ENCODE measurements at regions of chr2 and their contacts with region 1.

Region 1: DNA sequence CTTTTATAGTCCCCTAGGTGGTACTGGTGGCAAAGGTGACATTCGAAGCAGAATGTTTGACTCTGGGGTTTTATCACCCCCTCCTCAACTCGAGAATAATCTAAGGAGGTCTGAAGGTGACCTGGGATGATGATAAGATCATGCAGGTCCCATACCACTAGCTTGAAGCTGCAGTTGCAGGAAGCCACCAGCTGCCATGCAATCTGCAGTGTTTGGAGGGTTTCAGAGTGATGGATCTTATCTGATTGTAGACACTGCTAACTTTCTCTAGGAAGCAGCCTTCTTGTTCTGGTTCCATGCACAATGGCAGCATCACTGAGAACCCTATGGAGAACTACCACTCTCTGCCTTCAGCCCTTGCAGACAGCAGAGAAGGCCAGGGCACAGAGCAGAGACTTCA is 59.4 kb upstream of the LRPPRC start:
- DNase-seq: no peak
- ATAC-seq: no peak
- H3K4me3 ChIP-seq: no peak overlapping the region
- H3K4me3 Mint-ChIP-seq: no peak overlapping the region
- H3K27ac ChIP-seq: no peak overlapping the region
- H3K27ac Mint-ChIP-seq: no peak overlapping the region
- H3K4me1 ChIP-seq: no peaks in the 10 kb centered on the region
- H3K4me1 Mint-ChIP-seq: no peaks in the 10 kb centered on the region
- H3K27me3 ChIP-seq: no peaks in the 10 kb centered on the region
- H3K27me3 Mint-ChIP-seq: no peaks in the 10 kb centered on the region
- CTCF ChIP-seq: no peak

Region 2: GRCh38 chr2:44226753-44227152 is 171.5 kb after region 1 on chr2:
- CTCF ChIA-PET with region 1: no interaction called
- POLR2A ChIA-PET with region 1: no interaction called
- intact Hi-C with region 1: no loop called
- DNase-seq: no peak
- ATAC-seq: no peak
- H3K4me3 ChIP-seq: no peak overlapping the region
- H3K4me3 Mint-ChIP-seq: no peak overlapping the region
- H3K27ac ChIP-seq: no peak overlapping the region
- H3K27ac Mint-ChIP-seq: peak overlapping the region; percentile 36
- H3K4me1 ChIP-seq: no peaks in the 10 kb centered on the region
- H3K4me1 Mint-ChIP-seq: peaks cover 15% of the 10 kb centered on the region
- H3K27me3 ChIP-seq: no peaks in the 10 kb centered on the region
- H3K27me3 Mint-ChIP-seq: no peaks in the 10 kb centered on the region
- CTCF ChIP-seq: no peak

Region 3: GRCh38 chr2:44674473-44675284 is 619.5 kb after region 1 on chr2:
- CTCF ChIA-PET with region 1: no interaction called
- POLR2A ChIA-PET with region 1: no interaction called
- intact Hi-C with region 1: loop called in 1 of 2 experiments (anchors 5 kb)
- DNase-seq: peak in 1 of 14 experiments; percentile 13
- ATAC-seq: no peak
- H3K4me3 ChIP-seq: no peak overlapping the region
- H3K4me3 Mint-ChIP-seq: no peak overlapping the region
- H3K27ac ChIP-seq: no peak overlapping the region
- H3K27ac Mint-ChIP-seq: no peak overlapping the region
- H3K4me1 ChIP-seq: peaks cover 3% of the 10 kb centered on the region
- H3K4me1 Mint-ChIP-seq: peaks cover 10% of the 10 kb centered on the region
- H3K27me3 ChIP-seq: no peaks in the 10 kb centered on the region
- H3K27me3 Mint-ChIP-seq: no peaks in the 10 kb centered on the region
- CTCF ChIP-seq: no peak